Heart right ventricle (tissue), 16 donors: ENCODE measurements at regions of chr2 and their contacts with region 1.

Region 1: GRCh38 chr2:636641-637405 is 40.4 kb downstream of the TMEM18 start:
- DNase-seq: peak; percentile 59 to 75
- ATAC-seq: peak; percentile 68 to 81 (median 74)
- H3K4me3 ChIP-seq: peak overlapping the region in 9 of 10 donors; percentile 27 to 54 (median 41)
- H3K27ac ChIP-seq: no peak overlapping the region
- H3K4me1 ChIP-seq: peaks cover 5 to 9% (median 6%) of the 10 kb centered on the region in 9 donors
- H3K27me3 ChIP-seq: peaks cover 0 to 30% (median 14%) of the 10 kb centered on the region in 7 donors
- CTCF ChIP-seq: peak; percentile 69 to 87 (median 85)

Region 2: DNA sequence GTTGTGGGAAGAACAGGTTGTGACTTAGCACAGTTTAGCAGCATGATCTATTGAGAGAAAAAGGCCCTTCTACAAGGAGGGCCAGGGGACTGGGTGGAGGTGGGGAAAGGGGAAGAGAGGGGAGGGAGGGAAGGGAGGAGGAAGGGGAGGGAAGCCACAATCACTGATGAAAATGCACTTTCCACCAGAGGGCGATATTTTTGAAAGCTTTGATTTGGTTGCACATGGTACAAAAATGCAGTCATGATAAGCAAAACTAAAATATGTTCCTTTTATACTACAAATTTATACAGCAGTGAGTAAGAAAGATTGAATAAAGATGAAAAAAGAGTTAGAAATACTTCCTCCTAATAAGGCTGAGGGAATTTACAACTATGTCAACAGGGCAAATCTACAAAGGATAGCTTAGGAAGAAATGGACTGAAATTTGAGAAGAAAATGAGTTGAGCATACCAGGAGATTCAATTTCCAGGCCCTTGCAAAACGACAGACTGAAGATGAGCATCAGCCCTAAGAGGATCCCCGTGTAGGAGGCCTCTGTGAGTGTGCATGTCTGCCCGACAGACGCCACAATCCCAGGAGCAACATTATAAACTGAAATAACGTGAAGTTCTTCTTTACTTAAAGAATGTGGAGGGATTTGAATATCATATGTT is 390.2 kb before region 1 on chr2:
- intact Hi-C with region 1: loop called in 3 of 10 experiments (anchors 10 kb)
- DNase-seq: peak in 1 of 2 donors; percentile 29
- ATAC-seq: no peak
- H3K4me3 ChIP-seq: no peak overlapping the region
- H3K27ac ChIP-seq: no peak overlapping the region
- H3K4me1 ChIP-seq: no peaks in the 10 kb centered on the region
- H3K27me3 ChIP-seq: no peaks in the 10 kb centered on the region
- CTCF ChIP-seq: peak in 8 of 9 donors; percentile 13 to 70 (median 58)

Region 3: GRCh38 chr2:254241-254640 is 382.6 kb before region 1 on chr2:
- intact Hi-C with region 1: loop called in 3 of 10 experiments (anchors 10 kb)
- DNase-seq: no peak
- ATAC-seq: no peak
- H3K4me3 ChIP-seq: no peak overlapping the region
- H3K27ac ChIP-seq: no peak overlapping the region
- H3K4me1 ChIP-seq: no peaks in the 10 kb centered on the region
- H3K27me3 ChIP-seq: no peaks in the 10 kb centered on the region
- CTCF ChIP-seq: no peak